GM12878 (cell line): ENCODE measurements at regions of chr17 and their contacts with region 1.

Region 1: GRCh38 chr17:42819944-42820535 is 4.0 kb downstream of the BECN1 start:
- DNase-seq: no peak
- ATAC-seq: peak; percentile 69
- H3K4me3 ChIP-seq: no peak overlapping the region
- H3K27ac ChIP-seq: no peak overlapping the region
- H3K4me1 ChIP-seq: peaks cover 6% of the 10 kb centered on the region; the same call in 1 of the 2 replicates
- H3K27me3 ChIP-seq: no peaks in the 10 kb centered on the region
- CTCF ChIP-seq: peak; percentile 68 to 88 (median 74)
- EP300 ChIP-seq: no peak
- POLR2A ChIP-seq: no peak
- RAD21 ChIP-seq: peak; percentile 31; the same call in 1 of the 2 replicates

Region 2: GRCh38 chr17:42773290-42774035 is 46.6 kb before region 1 on chr17 and contains the start of gene VPS25:
- CTCF ChIA-PET with region 1: interaction called, 9 read pairs
- POLR2A ChIA-PET with region 1: interaction called, 10 read pairs
- RAD21 ChIA-PET with region 1: interaction called, 14 read pairs
- SMC1A ChIA-PET with region 1: interaction called, 3 read pairs
- in situ Hi-C with region 1: no loop called
- intact Hi-C with region 1: no loop called
- DNase-seq: no peak
- ATAC-seq: peak; percentile 93
- H3K4me3 ChIP-seq: peak within 1 kb of the TSS; percentile 75
- H3K27ac ChIP-seq: peak within 1 kb of the TSS; percentile 86
- H3K4me1 ChIP-seq: peaks cover 26% of the 10 kb centered on the region
- H3K27me3 ChIP-seq: no peaks in the 10 kb centered on the region
- CTCF ChIP-seq: peak in 1 of 3 experiments; percentile 13; a peak in 1 of 6 replicates
- EP300 ChIP-seq: no peak
- POLR2A ChIP-seq: peak; percentile 97
- RAD21 ChIP-seq: no peak
- polyA plus RNA-seq, gene VPS25: 131 to 185 TPM

Region 3: DNA sequence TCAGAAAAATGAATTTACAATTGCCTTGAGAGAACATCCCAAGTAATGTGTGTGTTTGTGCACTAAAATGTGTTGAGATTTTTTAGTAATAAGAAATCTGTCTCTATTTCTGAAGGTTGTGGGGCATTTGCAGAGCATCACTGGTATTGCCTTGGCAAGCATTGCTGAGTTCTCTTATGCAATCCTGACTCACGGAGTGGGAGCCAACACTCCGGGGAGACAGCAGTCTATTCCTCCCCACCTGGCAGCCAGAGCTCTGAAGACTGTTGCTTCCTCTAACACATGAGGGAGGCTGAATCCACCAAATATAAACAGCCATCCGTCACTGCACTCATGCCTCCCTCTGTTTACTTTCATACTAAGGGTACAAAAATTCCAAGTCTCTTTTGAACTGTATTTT is 10.8 kb before region 1 on chr17:
- CTCF ChIA-PET with region 1: interaction called, 17 read pairs
- POLR2A ChIA-PET with region 1: no interaction called
- RAD21 ChIA-PET with region 1: no interaction called
- SMC1A ChIA-PET with region 1: interaction called, 3 read pairs
- in situ Hi-C with region 1: no loop called
- intact Hi-C with region 1: no loop called
- DNase-seq: no peak
- ATAC-seq: no peak
- H3K4me3 ChIP-seq: no peak overlapping the region
- H3K27ac ChIP-seq: no peak overlapping the region
- H3K4me1 ChIP-seq: no peaks in the 10 kb centered on the region
- H3K27me3 ChIP-seq: no peaks in the 10 kb centered on the region
- CTCF ChIP-seq: no peak
- EP300 ChIP-seq: no peak
- POLR2A ChIP-seq: no peak
- RAD21 ChIP-seq: no peak

Region 4: GRCh38 chr17:42878123-42878880 is 58.3 kb after region 1 on chr17:
- CTCF ChIA-PET with region 1: no interaction called
- POLR2A ChIA-PET with region 1: no interaction called
- RAD21 ChIA-PET with region 1: no interaction called
- SMC1A ChIA-PET with region 1: no interaction called
- in situ Hi-C with region 1: no loop called
- intact Hi-C with region 1: no loop called
- DNase-seq: no peak
- ATAC-seq: no peak
- H3K4me3 ChIP-seq: no peak overlapping the region
- H3K27ac ChIP-seq: no peak overlapping the region
- H3K4me1 ChIP-seq: no peaks in the 10 kb centered on the region
- H3K27me3 ChIP-seq: no peaks in the 10 kb centered on the region; a peak in 2 of 4 replicates
- CTCF ChIP-seq: no peak
- EP300 ChIP-seq: no peak
- POLR2A ChIP-seq: no peak
- RAD21 ChIP-seq: no peak

Region 5: DNA sequence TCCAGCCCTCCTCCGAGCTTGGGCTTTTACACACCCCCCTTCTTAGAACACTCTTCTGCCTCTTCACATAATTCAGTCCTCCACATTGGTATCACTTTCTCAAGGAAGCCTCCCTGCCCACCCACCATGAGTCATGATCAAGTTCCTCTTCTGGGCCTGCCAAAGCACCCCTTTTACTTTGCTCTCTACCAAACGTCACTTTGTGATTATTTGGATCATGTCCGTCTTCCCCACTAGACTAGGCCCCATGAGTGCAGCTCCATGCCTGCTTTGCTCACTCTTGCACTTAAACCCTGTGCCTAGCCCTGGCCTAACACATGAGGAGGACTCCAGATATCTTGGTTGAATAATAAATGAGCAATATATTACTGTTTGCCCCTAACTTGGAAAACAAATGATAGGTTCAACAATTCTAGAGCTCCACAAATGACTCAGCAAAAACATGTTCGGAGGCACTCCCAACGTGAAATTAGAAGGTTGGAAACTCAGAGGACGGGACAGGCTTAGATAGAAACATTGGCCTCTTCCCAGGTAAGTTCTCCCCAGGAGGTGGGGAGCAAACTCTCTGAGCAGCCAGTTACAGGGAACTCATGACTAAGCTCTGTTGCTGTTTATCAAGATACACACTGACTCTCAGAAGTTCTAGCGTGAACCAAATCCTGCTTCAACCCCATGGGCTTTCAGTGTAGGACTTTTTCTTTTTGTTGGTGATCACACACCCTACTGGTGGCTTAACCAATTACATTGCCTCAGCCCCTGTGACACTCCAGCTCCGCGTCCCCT is 108.9 kb after region 1 on chr17:
- CTCF ChIA-PET with region 1: interaction called, 26 read pairs
- POLR2A ChIA-PET with region 1: no interaction called
- RAD21 ChIA-PET with region 1: interaction called, 4 read pairs
- SMC1A ChIA-PET with region 1: interaction called, 4 read pairs
- in situ Hi-C with region 1: no loop called
- intact Hi-C with region 1: no loop called
- DNase-seq: peak; percentile 45
- ATAC-seq: peak; percentile 94
- H3K4me3 ChIP-seq: no peak overlapping the region
- H3K27ac ChIP-seq: peak overlapping the region; percentile 77
- H3K4me1 ChIP-seq: peaks cover 9% of the 10 kb centered on the region
- H3K27me3 ChIP-seq: no peaks in the 10 kb centered on the region
- CTCF ChIP-seq: peak; percentile 47 to 65 (median 59); a peak in 5 of 6 replicates
- EP300 ChIP-seq: no peak
- POLR2A ChIP-seq: no peak
- RAD21 ChIP-seq: peak; percentile 68